H1 (cell line): ENCODE measurements at regions of chr22 and their contacts with region 1.

Region 1: GRCh38 chr22:19046719-19047609 is 75.2 kb downstream of the DGCR2 start:
- DNase-seq: no peak
- H3K4me3 ChIP-seq: no peak overlapping the region
- H3K27ac ChIP-seq: no peak overlapping the region
- H3K4me1 ChIP-seq: no peaks in the 10 kb centered on the region
- H3K27me3 ChIP-seq: no peaks in the 10 kb centered on the region
- CTCF ChIP-seq: no peak
- EP300 ChIP-seq: no peak
- POLR2A ChIP-seq: no peak
- RAD21 ChIP-seq: no peak

Region 2: GRCh38 chr22:19036523-19037273 is 10.3 kb before region 1 on chr22:
- CTCF ChIA-PET with region 1: interaction called, 12 read pairs
- POLR2A ChIA-PET with region 1: interaction called, 4 read pairs
- DNase-seq: no peak
- H3K4me3 ChIP-seq: no peak overlapping the region
- H3K27ac ChIP-seq: no peak overlapping the region
- H3K4me1 ChIP-seq: no peaks in the 10 kb centered on the region; a peak in 1 of 7 replicates
- H3K27me3 ChIP-seq: no peaks in the 10 kb centered on the region; a peak in 1 of 7 replicates
- CTCF ChIP-seq: peak; percentile 44 to 58 (median 53)
- EP300 ChIP-seq: no peak
- POLR2A ChIP-seq: no peak
- RAD21 ChIP-seq: peak; percentile 31 to 47; a peak in 3 of 4 replicates